Mammary epithelial cell (primary cell): ENCODE measurements at regions of chr3 and their contacts with region 1.

Region 1: GRCh38 chr3:10485380-10485779 is 20.0 kb downstream of the ATP2B2 start:
- DNase-seq: no peak
- H3K4me3 ChIP-seq: no peak overlapping the region
- H3K27ac ChIP-seq: no peak overlapping the region
- H3K4me1 ChIP-seq: no peaks in the 10 kb centered on the region
- H3K27me3 ChIP-seq: no peaks in the 10 kb centered on the region
- CTCF ChIP-seq: no peak

Region 2: DNA sequence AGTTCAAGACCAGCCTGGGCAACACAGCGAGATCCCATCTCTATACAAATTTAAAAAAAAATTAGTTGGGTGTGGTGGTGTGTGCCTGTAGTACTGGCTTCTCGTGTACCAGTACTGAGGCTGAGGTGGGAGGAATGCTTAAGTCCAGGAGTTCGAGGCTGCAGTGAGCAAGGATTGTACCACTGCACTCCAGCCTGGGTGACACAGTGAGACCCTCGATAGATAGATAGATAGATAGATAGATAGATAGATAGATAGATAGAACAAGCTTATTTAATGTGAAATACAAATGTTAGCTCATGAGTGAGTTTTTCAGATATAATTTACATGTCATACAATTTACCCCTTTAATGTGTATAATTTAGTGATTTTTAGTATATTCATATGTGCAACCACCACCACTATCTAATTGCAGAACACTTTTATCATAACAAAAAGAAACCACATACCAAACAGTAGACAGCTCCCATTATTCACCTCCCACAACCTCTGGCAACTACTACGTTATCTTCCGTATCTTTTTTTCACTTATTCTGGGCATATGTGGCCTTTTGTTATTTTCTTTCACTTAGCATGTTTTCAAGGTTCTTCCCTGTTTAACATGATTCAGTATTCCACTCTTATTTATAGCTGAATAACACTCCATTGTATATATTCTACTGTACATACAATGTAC is 520.0 kb before region 1 on chr3:
- CTCF ChIA-PET with region 1: no interaction called
- dilution Hi-C with region 1: no loop called
- in situ Hi-C with region 1: no loop called
- intact Hi-C with region 1: no loop called
- DNase-seq: no peak
- H3K4me3 ChIP-seq: no peak overlapping the region
- H3K27ac ChIP-seq: no peak overlapping the region
- H3K4me1 ChIP-seq: peaks cover 6% of the 10 kb centered on the region
- H3K27me3 ChIP-seq: no peaks in the 10 kb centered on the region
- CTCF ChIP-seq: no peak

Region 3: GRCh38 chr3:10524799-10525301 is 39.5 kb after region 1 on chr3:
- CTCF ChIA-PET with region 1: no interaction called
- dilution Hi-C with region 1: loop called (anchors 5 kb)
- in situ Hi-C with region 1: no loop called
- intact Hi-C with region 1: no loop called
- DNase-seq: no peak
- H3K4me3 ChIP-seq: no peak overlapping the region
- H3K27ac ChIP-seq: no peak overlapping the region
- H3K4me1 ChIP-seq: no peaks in the 10 kb centered on the region
- H3K27me3 ChIP-seq: peaks cover 2% of the 10 kb centered on the region
- CTCF ChIP-seq: no peak

Region 4: GRCh38 chr3:10557781-10558373 is 72.5 kb after region 1 on chr3:
- CTCF ChIA-PET with region 1: no interaction called
- dilution Hi-C with region 1: loop called (anchors 5 kb)
- in situ Hi-C with region 1: no loop called
- intact Hi-C with region 1: no loop called
- DNase-seq: peak; percentile 67
- H3K4me3 ChIP-seq: no peak overlapping the region
- H3K27ac ChIP-seq: no peak overlapping the region
- H3K4me1 ChIP-seq: peaks cover 8% of the 10 kb centered on the region
- H3K27me3 ChIP-seq: no peaks in the 10 kb centered on the region
- CTCF ChIP-seq: no peak

Region 5: GRCh38 chr3:10602769-10603768 is 117.7 kb after region 1 on chr3:
- CTCF ChIA-PET with region 1: no interaction called
- dilution Hi-C with region 1: no loop called
- in situ Hi-C with region 1: no loop called
- intact Hi-C with region 1: loop called (anchors 10 kb)
- DNase-seq: no peak
- H3K4me3 ChIP-seq: no peak overlapping the region
- H3K27ac ChIP-seq: no peak overlapping the region
- H3K4me1 ChIP-seq: peaks cover 9% of the 10 kb centered on the region
- H3K27me3 ChIP-seq: peaks cover 5% of the 10 kb centered on the region
- CTCF ChIP-seq: no peak

Region 6: DNA sequence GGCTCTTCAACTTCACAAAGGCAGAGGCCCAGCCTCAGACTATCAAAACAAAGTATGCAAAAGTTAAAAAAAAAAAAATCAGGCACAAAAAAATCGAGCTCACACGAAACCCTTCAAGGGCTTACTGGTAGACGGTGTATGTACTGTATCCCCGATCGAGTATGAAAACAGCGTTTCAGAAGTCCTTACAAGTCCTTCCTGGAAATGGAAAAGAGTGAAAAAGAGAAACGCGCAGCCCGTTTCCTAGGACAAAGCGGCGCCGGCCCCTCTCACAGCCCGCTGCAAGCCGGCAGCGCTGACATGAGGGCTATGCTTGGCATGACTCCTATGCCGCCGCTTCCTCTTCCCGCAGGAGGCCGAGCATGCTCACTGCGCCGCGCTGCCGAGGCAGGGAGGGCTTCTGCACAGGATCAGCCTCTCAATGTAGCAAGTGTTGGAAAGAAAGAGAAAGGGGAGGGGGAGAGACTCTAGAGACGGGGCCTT is 1158.3 kb after region 1 on chr3 and contains the start of gene VGLL4:
- CTCF ChIA-PET with region 1: no interaction called
- dilution Hi-C with region 1: no loop called
- in situ Hi-C with region 1: no loop called
- intact Hi-C with region 1: no loop called
- DNase-seq: peak; percentile 77
- H3K4me3 ChIP-seq: peak within 1 kb of the TSS; percentile 57 to 65 (median 61)
- H3K27ac ChIP-seq: peak within 1 kb of the TSS; percentile 93
- H3K4me1 ChIP-seq: peaks cover 31% of the 10 kb centered on the region
- H3K27me3 ChIP-seq: no peaks in the 10 kb centered on the region
- CTCF ChIP-seq: peak; percentile 6 to 31
- total RNA-seq, gene VGLL4: 30.8 to 77.3 TPM